ENCODE measurements at regions of chr11 and their contacts with region 1.

Region 1: GRCh38 chr11:128544471-128545051 is 42.8 kb downstream of the ETS1 start:
- DNase-seq: peak in 7 of 9 donors; percentile 30 to 46 (median 38)
- ATAC-seq: peak; percentile 72
- H3K4me3 ChIP-seq: no peak overlapping the region
- H3K4me3 Mint-ChIP-seq: peak overlapping the region; percentile 15 to 93 (median 82)
- H3K27ac ChIP-seq: peak overlapping the region; percentile 44
- H3K27ac Mint-ChIP-seq: peak overlapping the region in 8 of 9 donors; percentile 55 to 99 (median 90)
- H3K4me1 ChIP-seq: peaks cover 7 to 45% of the 10 kb centered on the region in 2 donors
- H3K4me1 Mint-ChIP-seq: peaks cover 33 to 79% (median 74%) of the 10 kb centered on the region in 7 donors
- H3K27me3 ChIP-seq: no peaks in the 10 kb centered on the region
- H3K27me3 Mint-ChIP-seq: peaks cover 0 to 3% (median 0%) of the 10 kb centered on the region in 5 donors

Region 2: GRCh38 chr11:128532572-128533091 is 11.9 kb before region 1 on chr11:
- CTCF ChIA-PET with region 1: interaction called, 12 read pairs
- POLR2A ChIA-PET with region 1: interaction called, 380 read pairs
- intact Hi-C with region 1: loop called (anchors 1 kb)
- DNase-seq: no peak
- ATAC-seq: no peak
- H3K4me3 ChIP-seq: no peak overlapping the region
- H3K4me3 Mint-ChIP-seq: no peak overlapping the region
- H3K27ac ChIP-seq: no peak overlapping the region
- H3K27ac Mint-ChIP-seq: peak overlapping the region in 3 of 9 donors; percentile 9 to 75 (median 18)
- H3K4me1 ChIP-seq: peaks cover 19 to 27% of the 10 kb centered on the region in 2 donors
- H3K4me1 Mint-ChIP-seq: peaks cover 29 to 74% (median 47%) of the 10 kb centered on the region in 7 donors
- H3K27me3 ChIP-seq: no peaks in the 10 kb centered on the region
- H3K27me3 Mint-ChIP-seq: peaks cover 0 to 12% (median 0%) of the 10 kb centered on the region in 5 donors